Activated CD4-positive, alpha-beta T cell treated with anti-CD3 and anti-CD28 coated beads for 36 hours (primary cell): ENCODE measurements at regions of chr12 and their contacts with region 1.

Region 1: GRCh38 chr12:86860776-86861175 is 604.6 kb upstream of the MGAT4C start:
- DNase-seq: no peak
- ATAC-seq: no peak
- H3K4me3 Mint-ChIP-seq: no peak overlapping the region
- H3K27ac Mint-ChIP-seq: no peak overlapping the region
- H3K4me1 Mint-ChIP-seq: no peaks in the 10 kb centered on the region
- H3K27me3 Mint-ChIP-seq: no peaks in the 10 kb centered on the region

Region 2: DNA sequence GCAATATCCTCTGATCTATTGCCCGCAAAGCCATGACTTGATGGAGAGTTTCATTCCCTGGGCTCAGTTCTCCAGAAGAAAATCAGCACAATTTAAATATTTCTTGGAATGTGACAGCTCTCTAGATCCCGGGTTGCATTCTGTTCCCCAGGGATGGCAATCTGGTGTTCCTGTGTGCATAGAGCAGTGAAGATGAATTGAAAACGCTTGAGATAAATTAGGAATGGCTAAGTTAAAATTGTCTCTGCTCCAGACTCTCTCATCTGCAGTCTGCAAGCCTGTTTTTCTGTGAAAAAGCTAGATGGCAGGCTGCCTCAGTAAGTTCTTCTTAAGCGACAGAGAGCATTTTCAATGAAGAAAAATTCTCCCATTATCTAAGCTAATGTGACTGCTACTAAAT is 22.1 kb before region 1 on chr12:
- CTCF ChIA-PET with region 1: no interaction called
- POLR2A ChIA-PET with region 1: no interaction called
- intact Hi-C with region 1: loop called in 1 of 2 experiments (anchors 1 kb)
- DNase-seq: no peak
- ATAC-seq: no peak
- H3K4me3 Mint-ChIP-seq: no peak overlapping the region
- H3K27ac Mint-ChIP-seq: no peak overlapping the region
- H3K4me1 Mint-ChIP-seq: no peaks in the 10 kb centered on the region
- H3K27me3 Mint-ChIP-seq: no peaks in the 10 kb centered on the region